PC-9 (cell line): ENCODE measurements at regions of chr5 and their contacts with region 1.

Region 1: DNA sequence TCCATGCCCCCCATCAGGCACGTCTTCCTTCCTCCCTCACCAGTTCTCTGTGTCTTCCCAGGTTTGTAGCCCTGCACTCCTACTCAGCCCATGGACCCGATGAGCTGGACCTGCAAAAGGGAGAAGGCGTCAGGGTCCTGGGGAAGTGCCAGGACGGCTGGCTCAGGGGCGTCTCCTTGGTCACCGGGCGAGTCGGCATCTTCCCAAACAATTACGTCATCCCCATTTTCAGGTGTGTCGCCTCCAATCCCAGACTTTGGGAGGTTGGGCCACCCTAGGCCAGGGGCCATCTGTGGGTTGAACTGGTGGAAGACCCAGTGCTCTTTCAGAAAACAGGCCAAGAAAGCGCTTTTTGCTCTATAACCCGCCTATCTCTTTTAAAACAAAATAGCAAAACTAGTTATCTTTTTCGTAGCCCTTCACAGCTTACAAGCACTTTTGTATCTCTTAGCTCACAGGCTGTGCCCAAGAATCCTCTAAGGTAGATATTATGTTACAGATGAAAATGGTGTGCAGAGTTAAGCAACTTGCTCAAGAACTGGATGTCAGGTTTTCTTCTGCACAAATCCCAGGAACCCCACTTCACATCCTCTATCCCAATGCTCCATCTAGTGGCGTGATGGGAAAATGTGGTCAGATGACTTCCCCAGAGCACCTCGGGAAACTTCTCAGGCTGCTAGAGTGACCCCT is 56.2 kb downstream of the PLAC8L1 start:
- DNase-seq: peak; percentile 67 to 68
- H3K4me3 ChIP-seq: no peak overlapping the region
- H3K27ac ChIP-seq: no peak overlapping the region
- H3K4me1 ChIP-seq: no peaks in the 10 kb centered on the region
- H3K27me3 ChIP-seq: no peaks in the 10 kb centered on the region
- CTCF ChIP-seq: peak; percentile 92

Region 2: GRCh38 chr5:145531038-145531734 is 518.0 kb before region 1 on chr5:
- CTCF ChIA-PET with region 1: no interaction called
- POLR2A ChIA-PET with region 1: no interaction called
- intact Hi-C with region 1: loop called (anchors 5 kb)
- DNase-seq: peak; percentile 88 to 93
- H3K4me3 ChIP-seq: no peak overlapping the region
- H3K27ac ChIP-seq: peak overlapping the region; percentile 71
- H3K4me1 ChIP-seq: peaks cover 25% of the 10 kb centered on the region
- H3K27me3 ChIP-seq: no peaks in the 10 kb centered on the region
- CTCF ChIP-seq: no peak

Region 3: DNA sequence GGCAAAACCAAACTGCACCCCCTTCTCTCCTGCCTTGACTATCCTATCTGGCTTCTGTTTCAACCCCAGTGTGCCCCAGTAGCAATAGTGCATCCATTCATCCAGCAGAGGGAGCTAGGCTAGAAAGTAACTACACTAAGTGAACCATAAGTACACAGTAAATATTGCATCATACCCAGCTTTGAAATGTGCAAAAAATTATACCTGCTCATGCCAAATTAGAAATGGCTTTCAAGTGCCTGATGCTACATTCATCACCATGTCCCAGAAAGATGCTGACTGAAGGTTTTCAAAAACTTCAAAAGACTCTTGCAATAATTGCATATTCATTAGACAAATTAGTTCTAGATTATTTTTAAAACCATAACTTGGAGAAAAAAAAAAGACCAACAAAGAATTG is 367.5 kb before region 1 on chr5:
- CTCF ChIA-PET with region 1: no interaction called
- POLR2A ChIA-PET with region 1: no interaction called
- intact Hi-C with region 1: loop called (anchors 1 kb)
- DNase-seq: peak; percentile 50 to 77
- H3K4me3 ChIP-seq: no peak overlapping the region
- H3K27ac ChIP-seq: no peak overlapping the region
- H3K4me1 ChIP-seq: no peaks in the 10 kb centered on the region
- H3K27me3 ChIP-seq: no peaks in the 10 kb centered on the region
- CTCF ChIP-seq: peak; percentile 88

Region 4: GRCh38 chr5:145856285-145856818 is 192.8 kb before region 1 on chr5:
- CTCF ChIA-PET with region 1: no interaction called
- POLR2A ChIA-PET with region 1: interaction called, 10 read pairs
- intact Hi-C with region 1: no loop called
- DNase-seq: peak in 1 of 2 experiments; percentile 51
- H3K4me3 ChIP-seq: no peak overlapping the region
- H3K27ac ChIP-seq: no peak overlapping the region
- H3K4me1 ChIP-seq: peaks cover 24% of the 10 kb centered on the region
- H3K27me3 ChIP-seq: no peaks in the 10 kb centered on the region
- CTCF ChIP-seq: no peak

Region 5: DNA sequence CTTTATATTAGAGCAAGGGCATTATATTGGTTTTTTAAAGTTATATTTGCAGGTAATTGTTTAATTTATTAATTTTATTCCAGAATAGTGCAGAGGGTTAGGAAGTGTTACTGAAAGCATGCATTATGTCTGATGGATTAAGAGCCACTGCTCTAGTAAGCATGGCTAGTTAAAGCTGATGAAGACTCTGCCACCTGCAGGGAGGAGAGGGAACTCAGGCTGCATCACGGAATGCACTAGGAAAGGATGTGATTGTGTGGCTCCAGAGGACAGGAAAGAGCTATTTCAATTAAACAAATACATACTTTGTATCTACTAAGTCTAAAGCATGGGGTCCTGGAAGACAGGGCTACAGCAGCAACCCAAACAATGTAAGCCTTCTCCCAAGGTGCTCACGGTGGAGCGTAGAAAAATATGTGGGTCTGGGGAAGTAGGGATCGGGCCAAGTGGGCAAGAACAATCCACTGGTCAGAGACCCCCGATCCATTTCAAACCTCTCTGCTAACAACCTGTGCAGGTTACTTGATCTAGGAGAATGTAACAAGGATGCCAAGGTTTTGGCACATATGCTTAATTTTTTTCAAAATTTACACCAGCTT is 161.1 kb before region 1 on chr5:
- CTCF ChIA-PET with region 1: interaction called, 3 read pairs
- POLR2A ChIA-PET with region 1: no interaction called
- intact Hi-C with region 1: loop called (anchors 1 kb)
- DNase-seq: peak; percentile 49 to 55
- H3K4me3 ChIP-seq: no peak overlapping the region
- H3K27ac ChIP-seq: no peak overlapping the region
- H3K4me1 ChIP-seq: no peaks in the 10 kb centered on the region
- H3K27me3 ChIP-seq: no peaks in the 10 kb centered on the region
- CTCF ChIP-seq: peak; percentile 80

Region 6: GRCh38 chr5:146426853-146427618 is 377.9 kb after region 1 on chr5:
- CTCF ChIA-PET with region 1: no interaction called
- POLR2A ChIA-PET with region 1: no interaction called
- intact Hi-C with region 1: loop called (anchors 1 kb)
- DNase-seq: peak in 1 of 2 experiments; percentile 39
- H3K4me3 ChIP-seq: no peak overlapping the region
- H3K27ac ChIP-seq: no peak overlapping the region
- H3K4me1 ChIP-seq: no peaks in the 10 kb centered on the region
- H3K27me3 ChIP-seq: no peaks in the 10 kb centered on the region
- CTCF ChIP-seq: peak; percentile 75

Region 7: GRCh38 chr5:146716636-146717035 is 667.5 kb after region 1 on chr5:
- CTCF ChIA-PET with region 1: no interaction called
- POLR2A ChIA-PET with region 1: no interaction called
- intact Hi-C with region 1: no loop called
- DNase-seq: no peak
- H3K4me3 ChIP-seq: no peak overlapping the region
- H3K27ac ChIP-seq: no peak overlapping the region
- H3K4me1 ChIP-seq: 0 out of 2 replicates have a peak, but pooled peaks cover 3% of the 10 kb centered on the region
- H3K27me3 ChIP-seq: no peaks in the 10 kb centered on the region
- CTCF ChIP-seq: no peak